B cell (primary cell): ENCODE measurements at regions of chr3 and their contacts with region 1.

Region 1: DNA sequence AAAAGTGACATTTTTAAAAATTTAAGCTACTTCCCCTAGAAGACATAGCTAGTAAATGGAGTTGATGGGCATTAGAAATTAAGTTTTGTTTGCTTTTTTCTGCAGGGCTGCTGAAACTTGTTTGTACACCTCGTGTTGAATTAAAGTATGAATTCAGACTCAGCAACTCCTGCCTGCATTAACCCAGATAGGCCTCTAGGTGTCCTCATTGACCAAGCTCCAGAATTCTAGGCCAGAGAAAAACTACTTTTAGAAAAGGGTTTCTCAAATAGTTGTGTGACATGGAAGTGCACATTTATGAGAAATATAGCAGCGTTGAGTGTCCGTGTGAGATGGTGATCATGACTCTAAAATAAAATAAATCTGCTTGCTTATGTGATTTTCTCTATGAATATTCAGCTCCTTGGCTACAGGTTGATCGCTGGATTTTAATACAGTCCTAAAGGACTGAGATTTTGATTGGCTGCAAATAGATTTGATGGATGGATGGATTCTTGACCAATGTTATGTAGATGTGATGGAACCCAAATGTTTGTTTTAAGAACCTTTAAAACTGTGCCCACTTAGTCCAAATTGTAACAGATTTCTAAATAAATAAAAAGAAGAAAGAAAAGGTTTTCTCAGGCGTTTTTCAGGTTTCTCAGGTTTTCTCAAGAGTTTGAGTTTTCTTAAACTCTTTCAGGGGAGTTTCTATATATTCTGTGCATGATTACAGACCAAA is 39.4 kb upstream of the LMOD3 start:
- DNase-seq: peak; percentile 48
- ATAC-seq: peak; percentile 69
- H3K4me3 ChIP-seq: no peak overlapping the region
- H3K4me3 Mint-ChIP-seq: no peak overlapping the region
- H3K27ac ChIP-seq: no peak overlapping the region
- H3K27ac Mint-ChIP-seq: no peak overlapping the region
- H3K4me1 ChIP-seq: no peaks in the 10 kb centered on the region
- H3K4me1 Mint-ChIP-seq: no peaks in the 10 kb centered on the region
- H3K27me3 ChIP-seq: no peaks in the 10 kb centered on the region
- H3K27me3 Mint-ChIP-seq: no peaks in the 10 kb centered on the region
- CTCF ChIP-seq: peak; percentile 95

Region 2: GRCh38 chr3:69149586-69149985 is 12.2 kb before region 1 on chr3:
- CTCF ChIA-PET with region 1: interaction called, 10 read pairs
- POLR2A ChIA-PET with region 1: no interaction called
- intact Hi-C with region 1: no loop called
- DNase-seq: no peak
- ATAC-seq: no peak
- H3K4me3 ChIP-seq: no peak overlapping the region
- H3K4me3 Mint-ChIP-seq: no peak overlapping the region
- H3K27ac ChIP-seq: no peak overlapping the region
- H3K27ac Mint-ChIP-seq: no peak overlapping the region
- H3K4me1 ChIP-seq: no peaks in the 10 kb centered on the region
- H3K4me1 Mint-ChIP-seq: no peaks in the 10 kb centered on the region
- H3K27me3 ChIP-seq: no peaks in the 10 kb centered on the region
- H3K27me3 Mint-ChIP-seq: no peaks in the 10 kb centered on the region
- CTCF ChIP-seq: no peak

Region 3: DNA sequence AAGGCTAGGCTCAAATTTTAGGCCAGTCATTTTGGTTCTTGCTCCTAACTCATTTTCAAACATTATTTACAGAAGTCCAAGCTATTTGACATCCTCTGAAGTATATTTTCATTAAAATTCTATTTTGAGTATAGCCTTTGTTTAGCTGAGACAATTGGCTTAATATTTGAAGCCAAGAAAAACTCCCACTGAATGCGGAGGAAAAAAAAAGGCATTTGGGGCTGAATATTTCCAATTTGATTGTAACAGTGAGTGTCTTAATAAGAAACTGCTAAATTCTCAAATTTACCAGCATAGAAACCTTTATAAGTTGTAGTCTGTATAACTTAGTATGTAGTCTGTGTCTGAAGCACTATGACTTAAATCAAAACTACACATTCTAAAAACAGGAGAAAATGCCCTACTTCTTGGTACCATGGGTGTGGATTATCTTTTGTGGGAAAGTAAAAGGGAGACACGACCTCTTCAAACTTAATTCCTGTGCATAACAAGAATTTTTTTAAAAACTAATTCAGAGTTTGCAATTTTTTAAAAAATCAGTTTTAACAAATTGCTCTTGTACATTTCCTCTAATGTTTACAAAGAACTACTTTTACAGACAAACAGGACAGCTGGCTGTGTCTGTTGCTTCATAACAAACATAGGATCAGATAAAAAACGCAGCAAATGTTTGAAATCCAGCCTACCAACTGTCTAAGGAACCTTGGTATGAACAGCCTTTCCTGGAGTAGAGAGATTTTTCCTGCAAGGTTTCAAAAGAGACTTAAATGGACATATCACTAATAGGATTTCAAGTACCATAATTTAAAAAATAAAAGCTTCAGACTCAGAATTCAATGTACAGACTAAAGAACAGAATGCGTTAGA is 13.4 kb after region 1 on chr3:
- CTCF ChIA-PET with region 1: interaction called, 25 read pairs
- POLR2A ChIA-PET with region 1: no interaction called
- intact Hi-C with region 1: no loop called
- DNase-seq: no peak
- ATAC-seq: no peak
- H3K4me3 ChIP-seq: no peak overlapping the region
- H3K4me3 Mint-ChIP-seq: no peak overlapping the region
- H3K27ac ChIP-seq: no peak overlapping the region
- H3K27ac Mint-ChIP-seq: no peak overlapping the region
- H3K4me1 ChIP-seq: no peaks in the 10 kb centered on the region
- H3K4me1 Mint-ChIP-seq: no peaks in the 10 kb centered on the region
- H3K27me3 ChIP-seq: no peaks in the 10 kb centered on the region
- H3K27me3 Mint-ChIP-seq: peaks cover 8% of the 10 kb centered on the region
- CTCF ChIP-seq: no peak

Region 4: DNA sequence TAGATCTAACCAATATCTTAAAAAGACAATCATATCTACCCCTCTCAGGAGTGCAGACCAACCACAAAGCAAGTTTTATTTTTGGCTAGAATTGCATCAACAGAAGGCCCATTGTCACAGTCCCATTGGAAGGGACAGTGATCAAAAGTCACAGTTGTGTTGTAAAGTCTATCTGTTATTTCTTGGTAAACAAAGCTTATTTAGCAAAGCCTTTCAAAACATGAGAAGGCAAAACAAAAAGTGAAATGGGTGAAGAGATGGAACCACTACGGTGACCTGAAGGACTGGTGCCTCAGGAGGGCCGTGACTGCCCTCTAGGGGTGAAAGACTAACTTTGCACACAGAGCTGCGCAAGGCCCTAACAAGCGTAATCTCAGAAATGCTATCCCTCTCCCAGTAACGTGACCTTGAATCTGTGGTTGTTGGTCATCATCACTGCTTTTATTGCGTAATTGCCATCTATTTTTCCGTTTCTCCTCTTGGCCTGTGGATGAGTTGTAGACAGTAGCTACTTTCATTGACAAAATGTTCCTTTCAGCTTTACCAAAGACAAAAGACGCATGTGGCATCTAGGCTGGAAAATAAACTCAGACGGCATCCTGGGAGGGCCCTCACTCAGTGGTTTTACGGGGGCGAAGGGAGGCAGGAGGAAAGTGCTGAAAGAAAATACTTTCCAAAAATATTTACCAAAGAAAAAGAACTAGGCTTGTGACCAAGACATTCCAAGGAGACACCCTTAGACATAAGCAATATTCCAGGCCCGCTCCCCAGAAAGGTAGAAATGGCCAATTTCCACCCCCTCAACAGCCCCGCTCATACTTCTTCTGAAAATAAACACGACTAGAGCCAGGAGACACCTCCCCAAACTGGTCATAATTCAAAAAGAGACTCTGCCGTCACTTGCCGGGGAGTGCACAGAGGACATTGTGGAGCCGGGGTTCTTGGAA is 144.8 kb after region 1 on chr3:
- CTCF ChIA-PET with region 1: interaction called, 40 read pairs
- POLR2A ChIA-PET with region 1: no interaction called
- intact Hi-C with region 1: loop called (anchors 1 kb)
- DNase-seq: peak; percentile 68
- ATAC-seq: peak; percentile 58
- H3K4me3 ChIP-seq: no peak overlapping the region
- H3K4me3 Mint-ChIP-seq: no peak overlapping the region
- H3K27ac ChIP-seq: no peak overlapping the region
- H3K27ac Mint-ChIP-seq: no peak overlapping the region
- H3K4me1 ChIP-seq: no peaks in the 10 kb centered on the region
- H3K4me1 Mint-ChIP-seq: peaks cover 3% of the 10 kb centered on the region
- H3K27me3 ChIP-seq: no peaks in the 10 kb centered on the region
- H3K27me3 Mint-ChIP-seq: no peaks in the 10 kb centered on the region
- CTCF ChIP-seq: peak; percentile 94

Region 5: DNA sequence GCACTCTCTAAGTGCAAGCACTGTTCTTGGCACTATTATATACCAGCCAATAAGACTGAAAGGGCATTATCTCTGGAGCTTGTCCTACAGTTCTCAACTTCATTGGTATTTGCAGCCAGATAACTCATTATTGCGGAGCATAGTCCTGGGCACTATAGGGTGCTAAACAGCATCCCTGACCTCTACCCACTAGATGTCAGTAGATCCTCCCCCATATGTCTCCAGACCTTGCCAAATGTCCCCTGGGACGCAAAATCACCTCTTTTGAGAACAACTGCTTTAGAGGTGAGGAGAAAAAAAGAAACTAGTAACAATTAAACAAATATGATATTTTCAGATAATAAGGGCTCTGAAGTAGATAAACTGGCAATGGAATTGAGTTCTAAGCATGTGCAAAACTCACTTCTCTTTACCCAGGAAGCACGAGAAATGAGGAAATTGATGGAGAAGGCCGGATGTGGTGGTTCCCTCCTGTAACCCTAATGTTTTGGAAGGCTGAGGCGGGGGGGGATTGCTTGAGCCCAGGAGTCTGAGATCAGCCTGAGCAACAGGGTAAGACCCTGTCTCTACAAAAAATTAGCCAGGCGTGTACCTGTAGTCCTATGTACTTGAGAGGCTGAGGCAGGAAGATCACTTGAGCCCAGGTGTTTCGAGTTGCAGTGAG is 162.7 kb after region 1 on chr3:
- CTCF ChIA-PET with region 1: interaction called, 3 read pairs
- POLR2A ChIA-PET with region 1: no interaction called
- intact Hi-C with region 1: loop called (anchors 5 kb)
- DNase-seq: peak; percentile 50
- ATAC-seq: peak; percentile 66
- H3K4me3 ChIP-seq: no peak overlapping the region
- H3K4me3 Mint-ChIP-seq: no peak overlapping the region
- H3K27ac ChIP-seq: no peak overlapping the region
- H3K27ac Mint-ChIP-seq: no peak overlapping the region
- H3K4me1 ChIP-seq: peaks cover 34 to 43% of the 10 kb centered on the region in 2 donors
- H3K4me1 Mint-ChIP-seq: peaks cover 50% of the 10 kb centered on the region
- H3K27me3 ChIP-seq: no peaks in the 10 kb centered on the region
- H3K27me3 Mint-ChIP-seq: no peaks in the 10 kb centered on the region
- CTCF ChIP-seq: no peak

Region 6: GRCh38 chr3:69410250-69410649 is 248.5 kb after region 1 on chr3:
- CTCF ChIA-PET with region 1: interaction called, 24 read pairs
- POLR2A ChIA-PET with region 1: no interaction called
- intact Hi-C with region 1: no loop called
- DNase-seq: peak; percentile 62
- ATAC-seq: peak; percentile 56
- H3K4me3 ChIP-seq: no peak overlapping the region
- H3K4me3 Mint-ChIP-seq: no peak overlapping the region
- H3K27ac ChIP-seq: no peak overlapping the region
- H3K27ac Mint-ChIP-seq: no peak overlapping the region
- H3K4me1 ChIP-seq: no peaks in the 10 kb centered on the region
- H3K4me1 Mint-ChIP-seq: peaks cover 4% of the 10 kb centered on the region
- H3K27me3 ChIP-seq: peaks cover 0 to 7% (median 0%) of the 10 kb centered on the region in 4 experiments
- H3K27me3 Mint-ChIP-seq: peaks cover 5% of the 10 kb centered on the region
- CTCF ChIP-seq: peak; percentile 72

Region 7: DNA sequence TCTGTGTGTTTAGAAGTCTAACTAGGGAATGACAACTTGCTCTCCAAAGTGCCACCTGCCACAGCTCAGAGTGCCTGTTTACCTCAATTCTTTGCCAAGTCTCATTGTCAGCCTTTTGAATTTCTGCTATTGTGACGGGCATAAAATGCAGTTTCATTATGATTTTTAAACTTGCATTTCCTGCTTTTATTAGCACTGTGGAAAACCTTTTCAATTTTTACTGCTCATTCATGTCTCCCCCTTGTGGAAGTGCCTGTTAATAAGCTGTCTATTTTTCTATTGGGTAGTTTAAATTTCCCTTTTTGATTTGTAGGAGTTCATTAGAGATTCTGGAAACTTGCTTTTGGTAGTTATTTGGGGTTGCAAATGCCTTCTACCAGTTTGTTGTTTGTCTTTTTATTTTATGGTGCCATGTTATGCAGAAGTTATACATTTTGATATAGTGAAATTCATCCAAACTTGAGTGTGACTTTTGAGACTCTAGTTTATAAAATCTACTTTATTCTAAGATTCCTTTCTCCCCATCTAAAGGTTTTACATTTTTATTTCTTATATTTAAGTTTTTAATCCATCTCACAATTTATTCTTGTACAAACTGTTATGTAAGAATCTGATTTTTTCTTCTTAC is 278.0 kb after region 1 on chr3:
- CTCF ChIA-PET with region 1: no interaction called
- POLR2A ChIA-PET with region 1: no interaction called
- intact Hi-C with region 1: loop called (anchors 5 kb)
- DNase-seq: no peak
- ATAC-seq: no peak
- H3K4me3 ChIP-seq: no peak overlapping the region
- H3K4me3 Mint-ChIP-seq: no peak overlapping the region
- H3K27ac ChIP-seq: no peak overlapping the region
- H3K27ac Mint-ChIP-seq: no peak overlapping the region
- H3K4me1 ChIP-seq: no peaks in the 10 kb centered on the region
- H3K4me1 Mint-ChIP-seq: peaks cover 4% of the 10 kb centered on the region
- H3K27me3 ChIP-seq: no peaks in the 10 kb centered on the region
- H3K27me3 Mint-ChIP-seq: no peaks in the 10 kb centered on the region
- CTCF ChIP-seq: peak; percentile 29

Region 8: GRCh38 chr3:69970827-69971226 is 809.1 kb after region 1 on chr3:
- CTCF ChIA-PET with region 1: no interaction called
- POLR2A ChIA-PET with region 1: no interaction called
- intact Hi-C with region 1: no loop called
- DNase-seq: no peak
- ATAC-seq: no peak
- H3K4me3 ChIP-seq: no peak overlapping the region
- H3K4me3 Mint-ChIP-seq: no peak overlapping the region
- H3K27ac ChIP-seq: no peak overlapping the region
- H3K27ac Mint-ChIP-seq: no peak overlapping the region
- H3K4me1 ChIP-seq: no peaks in the 10 kb centered on the region
- H3K4me1 Mint-ChIP-seq: no peaks in the 10 kb centered on the region
- H3K27me3 ChIP-seq: peaks cover 0 to 2% (median 0%) of the 10 kb centered on the region in 4 experiments
- H3K27me3 Mint-ChIP-seq: peaks cover 4% of the 10 kb centered on the region
- CTCF ChIP-seq: no peak